GM13977 (cell line): ENCODE measurements at regions of chr15 and their contacts with region 1.

Region 1: DNA sequence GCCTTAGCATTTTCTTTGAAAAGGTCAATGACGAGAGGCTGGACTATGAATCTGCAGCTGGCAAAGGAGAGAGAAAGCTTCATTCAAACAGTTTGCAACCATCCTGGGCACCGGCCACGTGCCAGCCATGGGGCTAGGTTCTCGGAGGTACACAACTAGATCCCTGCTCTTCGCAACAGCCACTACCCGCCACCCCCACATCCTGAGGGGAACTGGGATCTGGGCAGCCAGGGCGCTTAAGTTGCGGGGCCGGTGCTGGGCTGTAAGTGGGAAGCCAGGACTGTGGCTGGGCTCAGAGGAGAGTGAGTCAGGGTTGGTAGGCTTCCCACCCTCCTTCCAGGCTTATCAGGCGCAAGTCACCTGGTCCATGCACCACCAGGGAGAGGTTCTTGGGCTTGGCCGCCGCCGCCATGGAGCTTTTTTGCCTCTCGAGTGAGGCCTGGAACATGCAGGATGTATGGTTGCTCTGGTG is 95.0 kb upstream of the TERB2 start:
- DNase-seq: no peak
- CTCF ChIP-seq: no peak

Region 2: DNA sequence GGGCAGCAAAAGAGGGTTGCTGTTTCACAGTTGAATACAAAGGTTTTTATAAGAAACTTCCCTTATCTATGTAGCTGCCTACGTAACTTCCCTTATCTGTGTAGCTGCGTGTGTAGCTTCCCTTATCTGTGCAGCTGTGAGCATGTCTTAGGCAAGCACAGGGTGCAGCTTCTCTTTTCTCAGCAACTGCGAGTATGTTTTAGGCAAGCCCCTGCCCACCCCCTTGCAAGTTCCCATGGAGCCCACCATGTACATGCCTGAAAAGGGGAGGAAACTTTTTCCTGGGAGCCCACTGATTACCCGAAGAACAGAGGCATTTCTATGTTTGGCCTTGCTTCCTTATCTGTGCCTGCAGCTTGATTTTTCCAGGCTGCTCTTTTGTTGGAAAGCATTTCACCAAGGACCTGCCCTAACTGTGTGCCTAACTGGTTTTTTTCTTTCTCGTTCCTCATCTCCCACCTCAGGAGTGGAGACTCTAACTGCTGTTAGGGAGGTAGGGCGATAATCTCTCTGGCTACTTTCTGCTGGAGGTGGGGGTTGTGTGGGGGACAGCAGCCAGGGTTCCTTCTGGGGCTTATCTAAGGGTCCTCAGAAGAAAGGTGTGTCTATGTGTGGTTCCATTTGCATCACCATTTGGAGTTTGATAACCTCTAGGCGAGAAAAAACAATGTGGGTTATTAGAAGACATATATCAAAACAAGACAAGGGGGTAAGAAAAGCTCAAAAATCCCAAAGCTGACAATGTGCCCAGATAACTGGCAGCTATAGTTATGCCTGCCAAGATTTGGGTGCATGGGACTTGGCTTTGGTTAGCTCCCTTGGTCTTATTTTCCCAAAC is 187.5 kb after region 1 on chr15:
- in situ Hi-C with region 1: loop called (anchors 25 kb)
- DNase-seq: peak; percentile 41
- CTCF ChIP-seq: no peak